Gastrocnemius medialis (tissue), 4 donors: ENCODE measurements at regions of chr3 and their contacts with region 1.

Region 1: GRCh38 chr3:14780927-14781507 is 37.7 kb upstream of the FGD5 start:
- DNase-seq: no peak
- ATAC-seq: no peak
- H3K4me3 ChIP-seq: no peak overlapping the region
- H3K27ac ChIP-seq: no peak overlapping the region
- H3K4me1 ChIP-seq: no peaks in the 10 kb centered on the region
- H3K27me3 ChIP-seq: no peaks in the 10 kb centered on the region
- CTCF ChIP-seq: peak in 2 of 5 experiments; percentile 34 to 38
- POLR2A ChIP-seq: no peak

Region 2: GRCh38 chr3:14672588-14672987 is 108.4 kb before region 1 on chr3:
- in situ Hi-C with region 1: no loop called
- intact Hi-C with region 1: loop called (anchors 5 kb)
- DNase-seq: no peak
- ATAC-seq: no peak
- H3K4me3 ChIP-seq: no peak overlapping the region
- H3K27ac ChIP-seq: no peak overlapping the region
- H3K4me1 ChIP-seq: no peaks in the 10 kb centered on the region
- H3K27me3 ChIP-seq: no peaks in the 10 kb centered on the region
- CTCF ChIP-seq: no peak
- POLR2A ChIP-seq: no peak